ENCODE measurements at regions of chr10 and their contacts with region 1.

Region 1: GRCh38 chr10:91251430-91252056 is 31.1 kb downstream of the PCGF5 start:
- DNase-seq: peak; percentile 71
- H3K4me3 ChIP-seq: no peak overlapping the region
- H3K27ac ChIP-seq: no peak overlapping the region
- H3K4me1 ChIP-seq: no peaks in the 10 kb centered on the region
- H3K27me3 ChIP-seq: no peaks in the 10 kb centered on the region
- CTCF ChIP-seq: peak; percentile 86

Region 2: DNA sequence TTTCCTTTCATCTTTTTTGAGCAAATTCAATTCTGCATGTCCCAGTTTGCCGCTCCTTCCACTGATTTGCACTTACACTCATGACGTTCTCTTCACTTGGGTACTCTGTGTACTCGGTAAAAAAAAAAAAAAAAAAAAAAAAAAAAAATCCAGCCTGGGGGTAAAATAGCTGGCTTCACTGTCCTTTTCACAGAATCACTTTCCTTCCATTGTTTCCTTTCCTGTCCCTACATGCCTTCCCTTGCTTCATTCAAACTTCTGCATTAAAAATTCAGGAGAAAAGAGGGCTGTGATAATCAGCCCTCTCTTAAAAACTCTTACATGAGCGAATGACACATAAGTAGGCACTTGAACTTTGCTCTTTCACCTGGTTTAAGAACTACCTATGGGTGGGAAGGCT is 339.4 kb before region 1 on chr10:
- CTCF ChIA-PET with region 1: interaction called, 5 read pairs
- POLR2A ChIA-PET with region 1: no interaction called
- intact Hi-C with region 1: loop called (anchors 1 kb)
- DNase-seq: no peak
- H3K4me3 ChIP-seq: no peak overlapping the region
- H3K27ac ChIP-seq: no peak overlapping the region
- H3K4me1 ChIP-seq: no peaks in the 10 kb centered on the region
- H3K27me3 ChIP-seq: no peaks in the 10 kb centered on the region
- CTCF ChIP-seq: no peak

Region 3: GRCh38 chr10:91006001-91006751 is 245.4 kb before region 1 on chr10:
- CTCF ChIA-PET with region 1: interaction called, 10 read pairs
- POLR2A ChIA-PET with region 1: no interaction called
- intact Hi-C with region 1: loop called (anchors 1 kb)
- DNase-seq: peak; percentile 69
- H3K4me3 ChIP-seq: no peak overlapping the region
- H3K27ac ChIP-seq: no peak overlapping the region
- H3K4me1 ChIP-seq: no peaks in the 10 kb centered on the region
- H3K27me3 ChIP-seq: no peaks in the 10 kb centered on the region
- CTCF ChIP-seq: peak; percentile 88

Region 4: DNA sequence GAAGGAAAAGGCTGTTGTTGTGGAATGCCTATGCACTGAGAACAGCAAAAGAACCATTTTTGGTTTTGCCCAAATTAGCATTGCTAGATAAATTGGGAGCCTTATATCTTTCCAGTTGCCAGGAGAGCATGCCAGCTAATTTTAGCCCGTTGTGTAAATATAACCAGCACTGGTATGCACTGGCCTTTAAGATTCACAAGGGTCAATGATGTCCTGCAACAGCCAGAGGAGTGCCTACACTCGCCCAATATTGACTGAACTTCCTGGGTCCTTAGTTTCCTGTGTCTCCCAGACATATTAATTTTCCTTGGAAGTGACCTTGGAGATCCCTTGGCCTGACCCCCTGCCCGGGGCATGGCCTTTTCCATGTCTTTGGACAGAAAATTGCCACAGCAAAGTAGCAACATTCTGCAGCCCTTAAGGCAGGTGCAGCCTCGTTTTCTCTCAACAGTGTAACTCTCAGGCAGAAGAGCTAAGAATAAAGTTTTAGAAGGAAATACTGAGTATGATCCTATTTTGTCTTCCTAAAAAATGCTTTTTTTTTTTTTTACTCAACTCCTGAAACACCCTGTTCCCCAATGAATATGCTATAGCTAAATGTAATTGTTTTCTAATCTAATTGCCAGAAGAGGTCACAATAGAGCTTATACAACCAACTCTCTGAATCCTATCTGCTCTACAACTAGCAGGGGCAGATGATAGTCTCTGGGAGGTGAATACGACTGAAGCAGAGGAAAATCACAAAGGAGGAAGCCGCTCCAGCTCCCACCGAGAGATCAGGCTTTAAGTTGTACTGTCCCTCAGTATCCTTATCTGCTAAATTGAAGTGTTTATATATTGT is 163.0 kb before region 1 on chr10:
- CTCF ChIA-PET with region 1: interaction called, 7 read pairs
- POLR2A ChIA-PET with region 1: no interaction called
- intact Hi-C with region 1: loop called (anchors 5 kb)
- DNase-seq: peak; percentile 14
- H3K4me3 ChIP-seq: no peak overlapping the region
- H3K27ac ChIP-seq: no peak overlapping the region
- H3K4me1 ChIP-seq: no peaks in the 10 kb centered on the region
- H3K27me3 ChIP-seq: peaks cover 5% of the 10 kb centered on the region
- CTCF ChIP-seq: no peak; the same call in 1 of the 2 replicates

Region 5: GRCh38 chr10:91170418-91170817 is 81.1 kb before region 1 on chr10:
- CTCF ChIA-PET with region 1: no interaction called
- POLR2A ChIA-PET with region 1: no interaction called
- intact Hi-C with region 1: no loop called
- DNase-seq: no peak
- H3K4me3 ChIP-seq: no peak overlapping the region
- H3K27ac ChIP-seq: no peak overlapping the region
- H3K4me1 ChIP-seq: no peaks in the 10 kb centered on the region
- H3K27me3 ChIP-seq: peaks cover 44% of the 10 kb centered on the region
- CTCF ChIP-seq: no peak